Activated B cell treated with CpG ODN at 0.5 μM for 24 hours (primary cell): ENCODE measurements at regions of chr2 and their contacts with region 1.

Region 1: GRCh38 chr2:179440642-179441251 is 176.1 kb upstream of the SESTD1 start:
- DNase-seq: no peak
- ATAC-seq: peak; percentile 45
- H3K4me3 Mint-ChIP-seq: no peak overlapping the region
- H3K27ac Mint-ChIP-seq: no peak overlapping the region
- H3K4me1 Mint-ChIP-seq: no peaks in the 10 kb centered on the region
- H3K27me3 Mint-ChIP-seq: peaks cover 35% of the 10 kb centered on the region
- CTCF ChIP-seq: peak; percentile 81

Region 2: GRCh38 chr2:178761759-178762371 is 678.9 kb before region 1 on chr2:
- CTCF ChIA-PET with region 1: no interaction called
- POLR2A ChIA-PET with region 1: no interaction called
- intact Hi-C with region 1: loop called (anchors 1 kb)
- DNase-seq: no peak
- ATAC-seq: peak; percentile 54
- H3K4me3 Mint-ChIP-seq: no peak overlapping the region
- H3K27ac Mint-ChIP-seq: no peak overlapping the region
- H3K4me1 Mint-ChIP-seq: peaks cover 1% of the 10 kb centered on the region
- H3K27me3 Mint-ChIP-seq: no peaks in the 10 kb centered on the region
- CTCF ChIP-seq: no peak

Region 3: DNA sequence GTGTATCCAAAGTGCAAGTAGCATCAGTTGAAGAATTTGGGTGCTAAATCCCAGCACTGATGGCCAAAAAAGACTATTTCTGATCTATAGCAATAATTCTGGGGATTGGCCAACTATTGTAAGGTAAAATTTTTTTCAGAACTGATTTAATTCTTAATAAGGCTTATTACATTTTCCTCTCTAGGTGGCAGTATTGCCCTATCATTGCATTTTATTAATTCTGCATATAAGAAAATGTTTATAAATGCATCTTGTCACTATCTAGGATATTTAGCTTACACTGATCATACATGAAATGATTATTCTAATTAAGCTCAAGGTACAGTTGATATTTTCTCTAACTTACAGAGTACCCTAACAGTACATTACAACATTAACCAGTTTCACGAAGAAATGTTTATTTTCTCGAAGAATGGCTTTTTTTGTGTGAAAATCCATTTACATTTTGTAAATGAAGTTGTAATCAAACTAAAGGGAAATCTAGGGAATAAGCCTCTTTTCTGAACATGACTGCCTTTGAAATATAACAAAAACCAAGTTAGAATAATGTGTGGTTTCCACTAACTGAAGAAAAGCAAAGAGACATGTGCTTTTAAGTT is 644.6 kb before region 1 on chr2:
- CTCF ChIA-PET with region 1: no interaction called
- POLR2A ChIA-PET with region 1: no interaction called
- intact Hi-C with region 1: loop called (anchors 1 kb)
- DNase-seq: no peak
- ATAC-seq: no peak
- H3K4me3 Mint-ChIP-seq: no peak overlapping the region
- H3K27ac Mint-ChIP-seq: no peak overlapping the region
- H3K4me1 Mint-ChIP-seq: no peaks in the 10 kb centered on the region
- H3K27me3 Mint-ChIP-seq: no peaks in the 10 kb centered on the region
- CTCF ChIP-seq: no peak

Region 4: DNA sequence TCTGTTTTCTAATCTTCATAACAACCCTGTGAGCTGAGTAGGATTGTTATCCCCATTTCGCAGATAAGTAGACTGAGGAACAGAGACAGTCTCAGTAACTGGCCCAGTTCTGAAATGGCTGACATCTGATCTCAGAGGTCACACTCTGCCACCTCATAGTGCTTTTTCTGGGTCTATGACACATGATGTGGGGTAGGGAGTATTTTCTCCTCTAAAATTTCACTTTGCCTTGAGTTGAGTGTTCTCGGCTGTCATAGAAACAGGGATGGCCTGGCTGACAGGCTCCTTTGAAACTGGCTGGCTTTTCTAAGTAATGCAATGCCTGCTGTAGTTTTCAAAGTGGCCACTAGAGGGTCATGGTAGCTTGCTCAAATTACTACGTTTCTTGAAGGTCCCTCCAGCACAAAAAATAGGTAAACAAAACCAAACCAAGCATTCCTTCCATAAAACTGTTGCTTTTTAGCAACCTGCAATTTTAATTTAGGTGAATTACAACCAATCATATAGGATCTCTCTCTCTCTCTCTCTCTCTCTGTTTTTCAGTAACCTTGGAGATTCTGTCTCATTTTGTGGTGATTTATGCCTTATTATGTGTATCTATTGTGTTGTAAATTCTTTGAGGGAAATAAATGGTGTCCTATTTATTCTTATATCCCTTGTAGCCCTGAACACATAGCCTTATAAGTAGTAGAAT is 549.3 kb before region 1 on chr2:
- CTCF ChIA-PET with region 1: interaction called, 3 read pairs
- POLR2A ChIA-PET with region 1: no interaction called
- intact Hi-C with region 1: loop called (anchors 1 kb)
- DNase-seq: no peak
- ATAC-seq: peak; percentile 76
- H3K4me3 Mint-ChIP-seq: no peak overlapping the region
- H3K27ac Mint-ChIP-seq: no peak overlapping the region
- H3K4me1 Mint-ChIP-seq: no peaks in the 10 kb centered on the region
- H3K27me3 Mint-ChIP-seq: no peaks in the 10 kb centered on the region
- CTCF ChIP-seq: peak; percentile 64

Region 5: DNA sequence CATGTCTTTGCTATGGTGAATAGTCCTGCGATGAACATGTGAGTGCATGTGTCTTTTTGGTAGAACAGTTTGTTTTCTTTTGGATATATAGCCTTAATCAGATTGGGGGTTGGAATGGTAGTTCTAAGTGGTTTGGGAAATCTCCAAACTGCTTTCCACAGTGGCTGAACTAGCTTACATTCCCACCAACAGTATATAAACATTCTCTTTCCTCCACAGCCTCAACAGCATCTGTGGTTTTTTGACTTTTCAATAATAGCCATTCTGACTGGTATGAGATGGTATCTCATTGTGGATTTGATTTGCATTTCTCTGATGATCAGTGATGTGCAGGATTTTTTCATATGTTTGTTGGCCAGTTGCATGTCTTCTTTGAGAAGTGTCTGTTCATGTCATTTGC is 63.9 kb before region 1 on chr2:
- CTCF ChIA-PET with region 1: no interaction called
- POLR2A ChIA-PET with region 1: no interaction called
- intact Hi-C with region 1: no loop called
- DNase-seq: no peak
- ATAC-seq: no peak
- H3K4me3 Mint-ChIP-seq: no peak overlapping the region
- H3K27ac Mint-ChIP-seq: no peak overlapping the region
- H3K4me1 Mint-ChIP-seq: no peaks in the 10 kb centered on the region
- H3K27me3 Mint-ChIP-seq: peaks cover 19% of the 10 kb centered on the region
- CTCF ChIP-seq: no peak

Region 6: DNA sequence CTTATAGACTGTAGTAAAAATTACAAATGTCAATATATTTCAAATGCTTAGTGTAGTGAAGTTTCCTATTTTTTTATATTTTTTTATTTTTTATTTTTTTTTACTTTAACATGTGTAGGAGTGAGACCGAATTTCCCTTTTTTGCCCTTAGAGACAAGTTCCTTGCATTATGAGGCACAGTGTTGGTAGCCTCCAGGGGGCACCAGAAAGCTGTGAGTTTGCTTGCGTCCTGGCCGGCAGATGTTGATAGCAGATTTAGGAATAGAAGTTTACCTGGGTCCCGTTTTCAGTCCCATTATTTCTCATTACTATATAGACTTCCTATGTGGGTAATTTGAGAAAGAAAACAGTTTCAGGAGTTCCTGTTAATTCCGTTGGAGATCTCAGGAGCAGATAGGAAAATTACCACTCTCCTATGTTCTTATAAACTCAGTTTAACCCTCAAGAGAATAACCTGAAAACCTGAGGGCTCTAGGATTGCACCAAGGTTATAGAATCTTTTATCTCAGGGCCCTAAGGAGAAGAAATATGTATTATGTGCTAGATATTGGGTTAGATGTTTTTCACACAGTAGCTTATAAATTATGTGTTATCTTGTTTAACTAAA is 18.6 kb before region 1 on chr2:
- CTCF ChIA-PET with region 1: interaction called, 9 read pairs
- POLR2A ChIA-PET with region 1: no interaction called
- intact Hi-C with region 1: loop called (anchors 1 kb)
- DNase-seq: peak; percentile 19
- ATAC-seq: peak; percentile 66
- H3K4me3 Mint-ChIP-seq: no peak overlapping the region
- H3K27ac Mint-ChIP-seq: no peak overlapping the region
- H3K4me1 Mint-ChIP-seq: no peaks in the 10 kb centered on the region
- H3K27me3 Mint-ChIP-seq: peaks cover 9% of the 10 kb centered on the region
- CTCF ChIP-seq: peak; percentile 40

Region 7: GRCh38 chr2:180048251-180048650 is 607.5 kb after region 1 on chr2:
- CTCF ChIA-PET with region 1: no interaction called
- POLR2A ChIA-PET with region 1: no interaction called
- intact Hi-C with region 1: no loop called
- DNase-seq: no peak
- ATAC-seq: no peak
- H3K4me3 Mint-ChIP-seq: no peak overlapping the region
- H3K27ac Mint-ChIP-seq: no peak overlapping the region
- H3K4me1 Mint-ChIP-seq: no peaks in the 10 kb centered on the region
- H3K27me3 Mint-ChIP-seq: peaks cover 24% of the 10 kb centered on the region
- CTCF ChIP-seq: no peak